ENCODE measurements at regions of chr22 and their contacts with region 1.

Region 1: GRCh38 chr22:23849009-23850006 is 8.4 kb upstream of the SLC2A11 start:
- DNase-seq: peak; percentile 61 to 96
- H3K4me3 ChIP-seq: no peak overlapping the region
- CTCF ChIP-seq: peak in 2 of 3 donors; percentile 65 to 68
- POLR2A ChIP-seq: no peak

Region 2: DNA sequence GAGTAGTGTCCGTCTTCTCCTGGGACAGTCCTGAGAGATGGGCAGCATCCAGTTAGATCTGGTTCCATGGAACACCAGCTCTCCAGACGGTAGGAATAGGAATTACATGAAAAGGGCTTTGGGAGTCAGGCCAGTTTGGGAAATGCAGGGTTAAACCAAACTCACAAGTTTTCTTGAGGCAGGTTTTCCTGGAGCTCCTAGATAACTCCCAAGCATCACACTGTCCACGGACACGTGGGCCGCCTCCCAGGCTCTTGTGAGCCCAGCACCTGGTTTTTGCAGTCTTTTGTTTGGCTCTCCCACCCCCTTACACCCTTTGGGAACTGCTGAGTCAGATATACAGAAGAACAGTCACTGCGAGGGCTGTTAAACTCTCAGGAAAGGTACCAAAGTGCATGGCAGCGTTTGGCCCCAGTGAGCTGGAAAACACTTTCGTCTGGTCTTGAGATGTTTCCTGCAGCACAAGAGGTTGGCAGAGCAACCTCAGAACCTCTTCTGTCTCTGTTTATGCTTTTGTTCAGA is 579.0 kb before region 1 on chr22:
- intact Hi-C with region 1: no loop called
- DNase-seq: no peak
- H3K4me3 ChIP-seq: no peak overlapping the region
- CTCF ChIP-seq: no peak
- POLR2A ChIP-seq: no peak

Region 3: DNA sequence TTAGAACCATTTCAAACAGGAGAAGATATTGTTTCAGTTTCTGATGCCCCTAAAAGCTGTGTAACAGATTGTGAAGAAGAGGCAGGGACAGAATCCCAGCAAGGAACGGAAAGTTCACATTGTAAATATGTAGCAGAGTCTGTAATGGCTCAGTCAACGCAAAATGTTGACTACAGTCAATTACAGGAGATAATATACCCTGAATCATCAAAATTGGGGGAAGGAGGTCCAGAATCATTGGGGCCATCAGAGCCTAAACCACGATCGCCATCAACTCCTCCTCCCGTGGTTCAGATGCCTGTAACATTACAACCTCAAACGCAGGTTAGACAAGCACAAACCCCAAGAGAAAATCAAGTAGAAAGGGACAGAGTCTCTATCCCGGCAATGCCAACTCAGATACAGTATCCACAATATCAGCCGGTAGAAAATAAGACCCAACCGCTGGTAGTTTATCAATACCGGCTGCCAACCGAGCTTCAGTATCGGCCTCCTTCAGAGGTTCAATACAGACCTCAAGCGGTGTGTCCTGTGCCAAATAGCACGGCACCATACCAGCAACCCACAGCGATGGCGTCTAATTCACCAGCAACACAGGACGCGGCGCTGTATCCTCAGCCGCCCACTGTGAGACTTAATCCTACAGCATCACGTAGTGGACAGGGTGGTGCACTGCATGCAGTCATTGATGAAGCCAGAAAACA is 310.0 kb before region 1 on chr22:
- intact Hi-C with region 1: loop called (anchors 10 kb)
- DNase-seq: peak; percentile 79 to 94
- H3K4me3 ChIP-seq: no peak overlapping the region
- CTCF ChIP-seq: peak in 1 of 3 donors; percentile 69
- POLR2A ChIP-seq: no peak

Region 4: GRCh38 chr22:23767673-23768548 is 81.4 kb before region 1 on chr22 and contains the start of gene CHCHD10:
- intact Hi-C with region 1: loop called (anchors 5 kb)
- DNase-seq: peak; percentile 74 to 96
- H3K4me3 ChIP-seq: peak within 1 kb of the TSS; percentile 51
- CTCF ChIP-seq: peak in 1 of 3 donors; percentile 6
- POLR2A ChIP-seq: no peak
- total RNA-seq, gene CHCHD10: 3.8 to 28.3 (median 11.4) TPM

Region 5: DNA sequence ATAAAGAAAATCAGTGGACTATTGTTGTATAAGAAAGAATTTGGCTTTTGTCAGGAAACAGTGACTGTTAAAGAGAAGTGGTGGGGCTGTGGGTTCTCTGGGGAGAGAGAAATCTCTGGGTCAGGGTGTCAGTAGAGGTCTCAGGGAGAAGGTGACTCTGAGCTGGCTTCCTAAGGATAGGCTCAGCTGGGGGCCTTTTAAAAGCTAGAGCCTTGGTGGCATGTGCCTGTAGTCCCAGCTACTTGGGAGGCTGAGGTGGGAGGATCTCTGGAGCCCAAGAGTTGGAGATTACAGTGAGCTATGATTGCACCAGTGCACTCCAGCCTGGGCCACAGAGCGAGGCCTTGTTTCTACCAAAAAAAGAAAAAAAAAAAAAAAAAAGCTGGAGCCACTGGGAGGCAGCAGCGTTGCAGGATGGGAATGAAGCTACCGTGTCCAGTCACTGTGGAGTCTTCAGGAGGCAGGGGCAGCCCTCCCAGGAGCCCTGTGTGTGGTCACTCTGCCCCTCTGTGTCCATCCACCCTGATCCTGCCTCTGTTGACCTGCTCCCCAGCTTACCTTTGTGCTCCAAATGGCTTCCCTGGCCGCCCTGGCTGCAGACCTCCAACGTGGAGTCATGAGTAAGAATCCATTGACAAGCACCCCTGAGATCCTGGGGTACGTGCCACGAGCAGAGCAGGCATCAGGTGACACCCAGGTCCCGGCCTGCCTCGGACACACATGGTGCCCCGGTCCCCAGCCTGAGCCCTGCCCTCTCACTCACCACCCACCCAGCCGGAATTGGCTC is 39.5 kb after region 1 on chr22:
- intact Hi-C with region 1: no loop called
- DNase-seq: no peak
- H3K4me3 ChIP-seq: no peak overlapping the region
- CTCF ChIP-seq: no peak
- POLR2A ChIP-seq: no peak

Region 6: DNA sequence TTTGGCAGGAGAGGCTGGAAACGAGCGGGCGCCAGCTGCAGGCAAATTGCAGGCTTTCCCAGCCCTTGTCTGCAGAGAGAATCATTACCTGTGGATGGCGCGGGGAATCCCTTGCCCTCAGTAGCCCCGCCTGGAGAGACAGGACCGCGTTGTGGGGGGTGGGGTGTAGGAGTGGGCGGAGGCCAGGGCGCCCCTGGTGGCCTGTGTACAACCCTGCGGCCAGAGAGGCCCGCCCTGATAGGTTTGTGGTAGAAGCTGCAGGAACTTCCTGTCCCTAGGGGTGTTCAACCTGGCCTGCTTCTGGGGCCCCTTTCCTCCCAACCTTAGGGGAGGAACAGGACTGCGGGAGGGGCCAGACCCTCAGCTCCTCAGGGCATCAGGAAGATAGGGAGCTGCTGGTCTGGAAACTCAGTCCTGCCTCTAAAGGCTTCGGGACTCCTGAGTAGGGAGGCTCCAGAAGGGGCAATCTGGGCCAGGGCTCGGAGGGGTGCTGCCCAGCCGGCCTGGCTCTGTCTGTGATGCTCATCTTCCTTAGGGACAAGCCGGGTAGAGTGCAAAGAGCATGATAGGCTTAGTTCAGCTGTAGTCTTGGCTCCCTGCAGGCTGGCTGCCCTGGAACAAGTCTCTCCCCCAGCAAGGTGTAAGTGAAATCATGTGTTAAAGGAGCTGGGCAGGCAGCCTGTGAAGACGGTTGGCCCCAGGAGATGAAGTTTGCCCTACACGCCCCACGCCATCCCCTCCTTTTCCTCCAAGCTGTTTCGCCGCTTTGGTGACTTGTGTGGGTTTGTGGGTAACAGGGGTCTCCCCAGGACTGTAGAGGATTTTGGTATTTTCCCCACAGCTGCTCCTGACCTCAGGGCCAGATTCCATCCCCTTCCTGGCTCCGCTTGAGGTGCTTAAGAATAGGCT is 307.9 kb after region 1 on chr22:
- intact Hi-C with region 1: no loop called
- DNase-seq: peak; percentile 72 to 96
- H3K4me3 ChIP-seq: peak overlapping the region; percentile 52
- CTCF ChIP-seq: peak in 1 of 3 donors; percentile 63
- POLR2A ChIP-seq: no peak

Measured in lower leg skin (tissue), 4 donors.